Naive thymus-derived CD4-positive, alpha-beta T cell (primary cell): ENCODE measurements at regions of chr2 and their contacts with region 1.

Region 1: DNA sequence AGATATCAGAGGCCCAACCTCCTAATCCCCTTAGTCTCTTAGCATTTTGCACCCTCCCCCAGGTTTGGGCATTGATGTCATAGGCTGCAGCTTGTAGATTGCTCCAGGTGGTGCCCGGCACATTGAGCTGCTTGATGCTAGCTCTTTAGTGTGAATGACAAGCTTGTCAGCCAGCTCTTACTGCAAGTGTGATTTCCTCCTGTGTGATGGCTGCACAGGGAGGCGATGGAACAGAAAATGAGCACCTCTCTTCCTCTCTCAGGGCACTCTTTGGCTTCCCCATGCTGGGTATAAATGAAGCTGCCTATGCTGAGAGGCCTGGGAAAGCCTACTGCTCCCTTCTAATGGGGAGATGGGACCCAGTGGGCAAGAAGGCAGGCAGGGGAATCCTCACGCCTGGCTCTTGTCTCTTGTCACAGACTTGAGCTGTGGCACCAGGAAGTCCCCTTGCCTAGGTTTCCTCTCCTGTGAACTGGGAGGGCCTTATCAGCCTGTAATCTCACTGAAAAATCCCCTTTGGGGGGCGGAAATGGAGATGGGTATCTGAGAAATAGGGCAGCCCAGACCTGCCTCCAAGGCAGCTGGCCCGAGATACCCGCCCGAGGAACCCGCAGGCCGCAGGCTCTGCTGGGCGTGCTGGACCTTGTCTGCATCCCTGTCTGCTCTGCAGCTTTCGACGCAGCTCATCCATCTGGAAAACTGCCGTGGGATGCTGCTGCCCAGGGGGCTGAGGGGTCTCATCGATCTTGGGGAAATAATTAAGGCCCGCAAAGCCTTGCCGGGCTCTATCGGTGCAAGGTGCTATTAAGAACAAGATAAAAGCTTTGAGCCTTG is 163.5 kb upstream of the CXCR4 start:
- DNase-seq: peak; percentile 24 to 73 (median 53)
- ATAC-seq: peak; percentile 91
- H3K4me3 ChIP-seq: no peak overlapping the region
- H3K4me3 Mint-ChIP-seq: peak overlapping the region; percentile 16 to 79 (median 52)
- H3K27ac ChIP-seq: peak overlapping the region; percentile 58
- H3K27ac Mint-ChIP-seq: peak overlapping the region; percentile 86 to 98 (median 94)
- H3K4me1 ChIP-seq: peaks cover 26 to 33% of the 10 kb centered on the region in 2 donors
- H3K4me1 Mint-ChIP-seq: peaks cover 28 to 59% (median 50%) of the 10 kb centered on the region in 7 donors
- H3K27me3 ChIP-seq: no peaks in the 10 kb centered on the region
- H3K27me3 Mint-ChIP-seq: no peaks in the 10 kb centered on the region

Region 2: DNA sequence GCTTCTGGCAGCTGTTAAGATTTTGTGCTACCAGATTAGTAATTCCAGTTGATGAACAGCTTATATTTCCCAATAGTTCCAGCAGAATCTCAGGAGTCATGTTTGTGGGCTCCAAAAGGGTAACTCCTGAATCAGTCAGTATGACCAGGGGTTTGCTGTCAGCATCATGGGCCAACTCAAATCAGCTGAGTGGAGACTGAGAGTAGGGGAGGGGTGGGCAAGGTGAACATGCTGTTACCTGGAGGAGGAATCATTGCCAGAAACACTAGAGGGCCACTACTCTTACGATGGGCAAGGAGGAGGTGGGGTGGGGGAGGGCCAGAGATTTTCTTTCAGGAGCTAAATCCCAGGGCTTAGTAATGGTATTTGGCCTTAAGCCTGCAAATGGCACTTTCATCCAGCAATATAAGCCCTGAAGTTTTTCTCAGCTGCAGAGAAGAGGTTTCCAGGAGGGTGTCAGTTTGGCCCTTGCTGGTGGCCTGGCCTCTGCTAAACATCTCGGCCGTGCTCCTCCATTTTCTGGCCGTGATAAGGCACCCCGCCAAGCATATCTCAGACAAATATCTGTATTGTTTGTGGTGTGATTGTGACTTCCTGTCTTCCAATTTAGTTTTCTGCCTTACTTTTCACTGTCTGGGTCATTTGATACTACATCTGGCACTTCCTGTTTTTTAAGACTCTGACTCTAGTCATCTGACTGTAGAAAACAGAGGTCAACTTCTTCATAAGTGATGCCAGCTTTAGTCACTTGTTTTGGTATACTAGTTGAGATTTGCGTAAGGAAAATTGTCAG is 43.0 kb before region 1 on chr2:
- CTCF ChIA-PET with region 1: no interaction called
- POLR2A ChIA-PET with region 1: interaction called, 8 read pairs
- intact Hi-C with region 1: loop called in 1 of 2 experiments (anchors 5 kb)
- DNase-seq: peak in 8 of 9 donors; percentile 33 to 75 (median 60)
- ATAC-seq: peak; percentile 84
- H3K4me3 ChIP-seq: no peak overlapping the region
- H3K4me3 Mint-ChIP-seq: peak overlapping the region; percentile 26 to 64 (median 48)
- H3K27ac ChIP-seq: peak overlapping the region; percentile 25
- H3K27ac Mint-ChIP-seq: peak overlapping the region; percentile 84 to 95 (median 90)
- H3K4me1 ChIP-seq: peaks cover 31 to 36% of the 10 kb centered on the region in 2 donors
- H3K4me1 Mint-ChIP-seq: peaks cover 32 to 60% (median 54%) of the 10 kb centered on the region in 7 donors
- H3K27me3 ChIP-seq: no peaks in the 10 kb centered on the region
- H3K27me3 Mint-ChIP-seq: no peaks in the 10 kb centered on the region

Region 3: DNA sequence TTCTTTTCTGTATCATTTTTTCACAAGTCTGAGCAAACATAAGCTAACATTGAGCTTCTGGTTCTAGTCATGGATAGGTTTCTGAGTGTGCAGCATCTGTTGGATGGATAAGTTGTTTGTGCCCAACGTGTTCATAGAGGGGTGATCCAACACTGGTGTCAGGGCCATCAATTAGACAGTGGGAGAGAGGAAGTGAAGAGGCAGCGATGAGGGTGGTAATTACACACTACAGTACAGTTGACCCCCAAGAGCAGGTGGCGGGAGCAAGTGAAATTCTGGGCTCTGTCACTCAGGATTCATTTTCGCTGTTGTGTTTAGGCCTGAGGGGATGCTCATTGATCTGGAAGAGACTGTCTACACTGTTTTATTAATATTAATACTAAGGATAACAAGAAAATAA is 16.5 kb after region 1 on chr2:
- CTCF ChIA-PET with region 1: interaction called, 3 read pairs
- POLR2A ChIA-PET with region 1: interaction called, 4 read pairs
- intact Hi-C with region 1: loop called in 1 of 2 experiments (anchors 2 kb)
- DNase-seq: no peak
- ATAC-seq: no peak
- H3K4me3 ChIP-seq: no peak overlapping the region
- H3K4me3 Mint-ChIP-seq: no peak overlapping the region
- H3K27ac ChIP-seq: no peak overlapping the region
- H3K27ac Mint-ChIP-seq: no peak overlapping the region
- H3K4me1 ChIP-seq: no peaks in the 10 kb centered on the region
- H3K4me1 Mint-ChIP-seq: peaks cover 4 to 17% (median 13%) of the 10 kb centered on the region in 7 donors
- H3K27me3 ChIP-seq: no peaks in the 10 kb centered on the region
- H3K27me3 Mint-ChIP-seq: peaks cover 0 to 2% (median 0%) of the 10 kb centered on the region in 5 donors

Region 4: DNA sequence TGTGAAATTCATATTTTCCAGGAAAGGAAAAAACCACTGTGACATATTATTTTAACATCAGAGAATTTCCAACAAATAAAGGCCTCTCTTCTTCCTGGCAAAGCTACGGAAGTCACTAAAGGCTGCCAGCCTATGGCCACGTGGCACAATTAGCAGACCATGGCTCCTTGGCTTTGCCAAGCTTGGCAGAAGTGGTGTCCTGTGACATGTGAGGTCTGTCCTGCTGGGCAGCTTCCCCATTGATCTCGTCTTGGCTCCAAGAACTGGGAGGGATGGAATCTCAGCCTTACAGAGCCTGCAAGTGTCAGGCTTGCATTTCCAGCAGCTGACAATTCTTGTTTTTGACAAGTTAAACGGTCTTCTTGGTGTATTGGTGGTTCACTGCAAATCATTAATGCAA is 257.0 kb after region 1 on chr2:
- CTCF ChIA-PET with region 1: no interaction called
- POLR2A ChIA-PET with region 1: no interaction called
- intact Hi-C with region 1: no loop called
- DNase-seq: no peak
- ATAC-seq: no peak
- H3K4me3 ChIP-seq: no peak overlapping the region
- H3K4me3 Mint-ChIP-seq: no peak overlapping the region
- H3K27ac ChIP-seq: no peak overlapping the region
- H3K27ac Mint-ChIP-seq: no peak overlapping the region
- H3K4me1 ChIP-seq: no peaks in the 10 kb centered on the region
- H3K4me1 Mint-ChIP-seq: no peaks in the 10 kb centered on the region
- H3K27me3 ChIP-seq: no peaks in the 10 kb centered on the region
- H3K27me3 Mint-ChIP-seq: peaks cover 0 to 22% (median 11%) of the 10 kb centered on the region in 5 donors